ENCODE measurements at regions of chr4 and their contacts with region 1.

Region 1: GRCh38 chr4:122758033-122758432 is 25.5 kb downstream of the BBS12 start:
- DNase-seq: no peak
- H3K4me3 ChIP-seq: no peak overlapping the region
- H3K27me3 ChIP-seq: no peaks in the 10 kb centered on the region
- CTCF ChIP-seq: peak; percentile 59

Region 2: GRCh38 chr4:122798101-122798500 is 40.1 kb after region 1 on chr4:
- CTCF ChIA-PET with region 1: interaction called, 12 read pairs
- POLR2A ChIA-PET with region 1: no interaction called
- DNase-seq: peak; percentile 97
- H3K4me3 ChIP-seq: no peak overlapping the region
- H3K27me3 ChIP-seq: no peaks in the 10 kb centered on the region
- CTCF ChIP-seq: peak; percentile 23; the same call in 1 of the 2 replicates

Region 3: DNA sequence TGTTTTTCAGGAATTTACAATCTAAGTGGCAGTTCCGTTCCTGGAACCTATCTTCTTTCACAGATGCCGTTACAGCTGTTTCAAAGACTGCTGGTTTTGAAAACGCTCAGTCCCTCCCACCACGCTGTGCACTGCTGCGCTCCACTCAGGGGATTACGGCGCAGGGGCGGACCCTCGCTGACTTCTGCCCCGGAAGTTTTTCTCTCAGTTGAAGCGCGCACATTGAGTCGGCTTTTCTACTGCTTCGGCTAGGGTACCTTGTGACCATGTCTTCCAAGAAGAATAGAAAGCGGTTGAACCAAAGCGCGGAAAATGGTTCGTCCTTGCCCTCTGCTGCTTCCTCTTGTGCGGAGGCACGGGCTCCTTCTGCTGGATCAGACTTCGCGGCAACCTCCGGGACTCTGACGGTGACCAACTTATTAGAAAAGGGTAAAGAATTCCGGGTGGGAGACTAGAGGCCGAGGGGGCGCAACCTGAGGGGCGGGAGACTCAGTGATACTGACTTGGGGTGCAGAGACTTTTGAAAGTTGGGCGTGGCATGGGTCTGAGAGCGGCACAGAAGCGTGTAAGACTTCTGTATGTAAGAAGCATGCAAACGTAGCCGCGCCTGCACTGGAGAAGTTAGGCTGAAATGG is 165.0 kb after region 1 on chr4:
- CTCF ChIA-PET with region 1: interaction called, 13 read pairs
- POLR2A ChIA-PET with region 1: no interaction called
- DNase-seq: no peak
- H3K4me3 ChIP-seq: peak overlapping the region; percentile 76
- H3K27me3 ChIP-seq: no peaks in the 10 kb centered on the region
- CTCF ChIP-seq: 0 out of 2 replicates have a peak, but pooled peaks have one; percentile 2

Measured in BJ (cell line).